ENCODE measurements at regions of chr3 and their contacts with region 1.

Region 1: GRCh38 chr3:111539351-111540331 is 2.4 kb upstream of the CD96 start:
- DNase-seq: peak; percentile 38
- ATAC-seq: peak; percentile 89
- H3K4me3 ChIP-seq: 0 out of 2 replicates have a peak overlapping the region, but pooled peaks have one; percentile 14
- H3K27ac ChIP-seq: no peak overlapping the region
- H3K4me1 ChIP-seq: peaks cover 18% of the 10 kb centered on the region
- H3K27me3 ChIP-seq: no peaks in the 10 kb centered on the region
- CTCF ChIP-seq: peak; percentile 70 to 94 (median 78)
- EP300 ChIP-seq: peak; percentile 30 to 53; a peak in 1 of 4 replicates
- POLR2A ChIP-seq: no peak
- RAD21 ChIP-seq: peak; percentile 80

Region 2: GRCh38 chr3:109731620-109732473 is 1807.8 kb before region 1 on chr3:
- CTCF ChIA-PET with region 1: no interaction called
- POLR2A ChIA-PET with region 1: no interaction called
- RAD21 ChIA-PET with region 1: no interaction called
- SMC1A ChIA-PET with region 1: no interaction called
- in situ Hi-C with region 1: loop called (anchors 10 kb)
- intact Hi-C with region 1: loop called (anchors 1 kb)
- DNase-seq: no peak
- ATAC-seq: peak; percentile 91
- H3K4me3 ChIP-seq: no peak overlapping the region
- H3K27ac ChIP-seq: no peak overlapping the region
- H3K4me1 ChIP-seq: no peaks in the 10 kb centered on the region
- H3K27me3 ChIP-seq: no peaks in the 10 kb centered on the region
- CTCF ChIP-seq: peak; percentile 73 to 79 (median 74)
- EP300 ChIP-seq: no peak
- POLR2A ChIP-seq: no peak
- RAD21 ChIP-seq: peak; percentile 72

Region 3: DNA sequence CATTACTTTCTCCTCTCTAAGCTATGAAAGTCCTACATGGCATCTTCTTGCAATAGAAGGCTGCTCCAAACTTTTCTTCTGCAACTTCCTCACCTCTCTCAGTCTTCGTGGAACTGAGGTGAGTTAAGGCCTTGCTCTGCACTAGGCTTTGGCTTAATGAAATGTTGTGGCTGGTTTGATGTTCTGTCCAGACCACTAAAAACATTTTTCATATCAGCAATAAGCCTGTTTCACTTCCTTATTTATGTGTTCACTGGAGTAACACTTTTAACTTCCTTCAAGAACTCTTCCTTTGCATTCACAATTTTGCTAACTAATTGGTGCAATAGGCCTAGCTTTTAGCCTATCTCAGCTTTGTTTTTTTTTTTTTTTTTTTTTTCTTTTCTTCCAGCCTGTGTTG is 803.3 kb before region 1 on chr3:
- CTCF ChIA-PET with region 1: no interaction called
- POLR2A ChIA-PET with region 1: no interaction called
- RAD21 ChIA-PET with region 1: no interaction called
- SMC1A ChIA-PET with region 1: no interaction called
- in situ Hi-C with region 1: no loop called
- intact Hi-C with region 1: loop called (anchors 5 kb)
- DNase-seq: peak; percentile 1
- ATAC-seq: peak; percentile 87
- H3K4me3 ChIP-seq: no peak overlapping the region
- H3K27ac ChIP-seq: no peak overlapping the region
- H3K4me1 ChIP-seq: no peaks in the 10 kb centered on the region
- H3K27me3 ChIP-seq: no peaks in the 10 kb centered on the region
- CTCF ChIP-seq: no peak
- EP300 ChIP-seq: no peak
- POLR2A ChIP-seq: no peak
- RAD21 ChIP-seq: no peak

Region 4: GRCh38 chr3:111080413-111080812 is 459.2 kb before region 1 on chr3:
- CTCF ChIA-PET with region 1: no interaction called
- POLR2A ChIA-PET with region 1: no interaction called
- RAD21 ChIA-PET with region 1: interaction called, 7 read pairs
- SMC1A ChIA-PET with region 1: interaction called, 3 read pairs
- in situ Hi-C with region 1: no loop called
- intact Hi-C with region 1: loop called (anchors 10 kb)
- DNase-seq: no peak
- ATAC-seq: no peak; the same call in 2 of the 3 replicates
- H3K4me3 ChIP-seq: no peak overlapping the region
- H3K27ac ChIP-seq: no peak overlapping the region
- H3K4me1 ChIP-seq: no peaks in the 10 kb centered on the region
- H3K27me3 ChIP-seq: no peaks in the 10 kb centered on the region
- CTCF ChIP-seq: peak in 2 of 3 experiments; percentile 4 to 33; a peak in 1 of 6 replicates
- EP300 ChIP-seq: no peak
- POLR2A ChIP-seq: no peak
- RAD21 ChIP-seq: peak; percentile 38; the same call in 1 of the 2 replicates

Region 5: DNA sequence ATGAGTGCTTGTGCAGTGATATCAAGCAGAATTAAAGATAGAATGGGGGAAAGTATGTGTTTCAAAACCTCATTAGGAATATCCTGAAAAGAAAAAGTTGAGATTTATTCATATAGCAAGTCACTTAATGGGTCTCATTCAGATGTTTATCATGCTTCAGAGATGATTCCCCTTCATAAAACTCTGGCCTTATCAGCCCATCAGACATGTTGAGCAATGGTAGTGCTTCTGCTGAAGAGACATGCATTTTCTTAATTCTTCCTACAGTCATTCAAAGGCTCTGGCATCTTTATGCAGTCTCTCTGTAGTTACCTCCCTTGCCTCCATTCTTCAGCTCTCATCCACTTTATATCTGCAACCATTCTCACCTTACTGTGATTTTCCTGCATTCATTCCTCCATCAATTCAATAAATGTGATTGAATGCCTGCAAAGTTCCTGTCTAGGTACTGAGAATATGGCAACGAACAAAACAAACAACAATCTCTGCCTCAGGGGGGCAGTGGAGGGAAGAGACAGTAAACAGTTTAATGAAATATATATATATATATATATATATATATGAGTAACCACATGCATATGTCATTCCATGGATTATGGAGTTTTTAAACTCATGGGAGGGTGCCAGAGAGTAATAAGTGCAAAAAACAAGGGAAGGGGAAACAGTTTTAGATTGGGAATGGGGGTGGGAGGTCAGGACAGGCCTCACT is 329.5 kb before region 1 on chr3:
- CTCF ChIA-PET with region 1: no interaction called
- POLR2A ChIA-PET with region 1: no interaction called
- RAD21 ChIA-PET with region 1: no interaction called
- SMC1A ChIA-PET with region 1: no interaction called
- in situ Hi-C with region 1: no loop called
- intact Hi-C with region 1: loop called (anchors 1 kb)
- DNase-seq: no peak
- ATAC-seq: no peak
- H3K4me3 ChIP-seq: no peak overlapping the region
- H3K27ac ChIP-seq: no peak overlapping the region
- H3K4me1 ChIP-seq: no peaks in the 10 kb centered on the region
- H3K27me3 ChIP-seq: no peaks in the 10 kb centered on the region
- CTCF ChIP-seq: no peak
- EP300 ChIP-seq: no peak
- POLR2A ChIP-seq: no peak
- RAD21 ChIP-seq: no peak

Region 6: DNA sequence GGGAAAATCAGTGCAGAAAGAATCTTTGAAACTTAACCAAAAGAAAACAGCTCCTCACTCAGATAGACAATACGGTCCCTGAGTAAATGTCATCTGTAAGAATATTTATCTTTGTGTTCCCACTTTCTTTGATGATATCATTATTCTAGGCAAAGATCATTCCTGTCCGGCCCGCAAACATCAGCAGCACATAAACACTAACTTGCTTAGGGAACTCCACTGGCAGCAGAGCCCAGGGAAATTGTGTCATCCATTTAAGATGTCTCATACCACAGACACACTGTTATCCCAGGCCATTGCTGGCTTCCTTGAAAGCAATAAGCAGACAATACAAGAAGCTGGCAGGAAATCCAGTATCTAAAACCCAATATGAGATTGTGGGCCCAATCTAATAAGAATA is 17.8 kb before region 1 on chr3:
- CTCF ChIA-PET with region 1: interaction called, 16 read pairs
- POLR2A ChIA-PET with region 1: no interaction called
- RAD21 ChIA-PET with region 1: no interaction called
- SMC1A ChIA-PET with region 1: interaction called, 8 read pairs
- in situ Hi-C with region 1: no loop called
- intact Hi-C with region 1: no loop called
- DNase-seq: no peak
- ATAC-seq: no peak
- H3K4me3 ChIP-seq: no peak overlapping the region
- H3K27ac ChIP-seq: no peak overlapping the region
- H3K4me1 ChIP-seq: no peaks in the 10 kb centered on the region
- H3K27me3 ChIP-seq: no peaks in the 10 kb centered on the region
- CTCF ChIP-seq: no peak
- EP300 ChIP-seq: no peak
- POLR2A ChIP-seq: no peak
- RAD21 ChIP-seq: no peak